H1 (cell line): ENCODE measurements at regions of chr22 and their contacts with region 1.

Region 1: DNA sequence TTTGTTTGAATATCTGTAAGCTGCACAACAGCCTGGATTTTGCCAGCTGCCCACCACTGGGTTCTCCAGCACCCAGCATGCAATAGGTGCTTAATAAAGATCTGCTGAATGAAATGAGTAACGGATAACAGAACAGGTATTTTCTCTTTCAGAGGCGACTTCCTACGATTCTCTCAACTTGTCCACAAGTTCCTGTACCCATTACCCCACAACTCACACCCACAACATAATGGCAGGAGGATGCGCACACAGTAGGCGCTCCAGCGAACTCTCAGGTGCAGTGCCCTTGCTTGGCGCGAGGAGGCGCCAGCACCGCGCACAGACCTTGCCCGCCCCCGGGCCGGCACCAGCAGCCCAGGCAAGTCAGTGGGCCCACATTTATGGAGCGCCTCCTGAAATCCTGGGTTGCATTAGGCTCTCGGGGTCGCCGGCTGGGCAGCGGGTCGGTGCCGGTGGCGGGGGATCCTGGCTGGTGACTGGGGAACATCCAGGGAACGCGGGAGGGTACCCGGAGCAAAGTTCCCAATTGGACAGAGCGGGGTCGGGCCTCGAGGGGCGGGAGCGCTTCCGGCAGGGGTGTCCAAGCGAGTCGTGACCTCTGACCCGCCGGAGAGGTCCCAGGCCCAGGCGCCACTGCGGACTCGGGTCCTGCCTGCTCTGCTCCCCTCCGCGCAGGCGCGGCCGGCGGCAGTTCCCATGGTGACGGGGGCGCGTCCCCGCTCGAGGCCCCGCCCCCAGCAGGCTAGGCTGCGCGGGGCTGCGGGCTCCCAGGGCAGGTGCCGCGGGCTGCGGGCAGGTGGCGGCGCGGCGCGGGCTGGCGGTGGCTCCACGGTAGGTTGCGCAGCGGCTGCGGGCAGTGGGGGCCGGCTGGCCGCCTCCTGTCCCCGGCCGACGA is at the start of gene KIAA1671:
- DNase-seq: peak; percentile 84 to 98
- H3K4me3 ChIP-seq: peak within 1 kb of the TSS; percentile 70 to 83 (median 77)
- H3K27ac ChIP-seq: peak within 1 kb of the TSS; percentile 89
- H3K4me1 ChIP-seq: peaks cover 5 to 22% (median 8%) of the 10 kb centered on the region in 4 experiments
- H3K27me3 ChIP-seq: peaks cover 0 to 3% (median 1%) of the 10 kb centered on the region in 4 experiments; a peak in 2 of 7 replicates
- CTCF ChIP-seq: peak; percentile 95 to 99 (median 95)
- EP300 ChIP-seq: 0 out of 3 replicates have a peak, but pooled peaks of 1 of the 2 experiments have one; percentile 15
- POLR2A ChIP-seq: no peak
- RAD21 ChIP-seq: peak; percentile 92 to 94
- total RNA-seq, gene KIAA1671: 22.6 and 23.9 TPM in 2 replicates

Region 2: DNA sequence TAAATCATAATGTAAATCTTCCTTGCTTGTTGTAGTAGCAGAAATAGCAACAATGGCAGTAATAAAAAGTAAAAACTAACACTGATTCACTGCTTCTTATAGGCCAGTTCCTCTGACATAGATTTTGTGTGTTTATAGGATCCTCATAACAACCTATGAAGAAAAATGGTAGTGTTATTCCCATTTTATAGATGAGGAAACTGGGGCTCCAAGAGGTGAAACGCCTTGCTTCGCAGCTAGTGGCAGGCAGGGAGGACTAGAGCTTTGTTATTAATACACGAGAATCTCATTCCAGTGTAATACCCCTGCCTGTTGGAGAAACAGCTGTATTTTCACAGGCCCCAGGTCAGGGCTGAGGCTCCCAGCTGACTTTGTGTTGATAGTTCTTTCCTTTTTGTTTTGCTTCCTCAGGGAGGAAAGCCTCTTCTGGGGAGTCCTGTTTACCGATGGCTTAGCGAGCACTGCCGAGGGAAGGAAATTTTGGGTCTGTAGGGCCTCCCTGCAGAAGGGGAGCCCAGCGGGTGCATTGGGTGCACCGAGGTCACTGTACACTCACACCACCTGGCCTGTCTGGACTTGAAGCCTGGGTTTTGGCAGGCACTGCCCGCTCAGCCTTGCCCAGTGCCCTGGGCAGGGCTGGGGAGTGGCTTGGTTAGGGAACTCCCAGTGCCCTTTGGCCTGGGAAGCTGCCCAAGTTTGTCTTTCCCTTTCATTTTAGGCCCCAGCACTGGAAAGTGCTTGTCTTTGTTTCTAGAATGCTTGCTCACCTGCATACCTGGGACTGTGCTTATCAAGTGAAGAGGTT is 13.8 kb after region 1 on chr22:
- CTCF ChIA-PET with region 1: interaction called, 5 read pairs
- POLR2A ChIA-PET with region 1: interaction called, 14 read pairs
- DNase-seq: no peak
- H3K4me3 ChIP-seq: no peak overlapping the region
- H3K27ac ChIP-seq: no peak overlapping the region
- H3K4me1 ChIP-seq: peaks cover 8 to 14% (median 13%) of the 10 kb centered on the region in 4 experiments; a peak in 6 of 7 replicates
- H3K27me3 ChIP-seq: no peaks in the 10 kb centered on the region
- CTCF ChIP-seq: no peak
- EP300 ChIP-seq: no peak
- POLR2A ChIP-seq: no peak
- RAD21 ChIP-seq: no peak